Posterior cingulate gyrus (tissue), 11 donors: ENCODE measurements at regions of chr20 and their contacts with region 1.

Region 1: DNA sequence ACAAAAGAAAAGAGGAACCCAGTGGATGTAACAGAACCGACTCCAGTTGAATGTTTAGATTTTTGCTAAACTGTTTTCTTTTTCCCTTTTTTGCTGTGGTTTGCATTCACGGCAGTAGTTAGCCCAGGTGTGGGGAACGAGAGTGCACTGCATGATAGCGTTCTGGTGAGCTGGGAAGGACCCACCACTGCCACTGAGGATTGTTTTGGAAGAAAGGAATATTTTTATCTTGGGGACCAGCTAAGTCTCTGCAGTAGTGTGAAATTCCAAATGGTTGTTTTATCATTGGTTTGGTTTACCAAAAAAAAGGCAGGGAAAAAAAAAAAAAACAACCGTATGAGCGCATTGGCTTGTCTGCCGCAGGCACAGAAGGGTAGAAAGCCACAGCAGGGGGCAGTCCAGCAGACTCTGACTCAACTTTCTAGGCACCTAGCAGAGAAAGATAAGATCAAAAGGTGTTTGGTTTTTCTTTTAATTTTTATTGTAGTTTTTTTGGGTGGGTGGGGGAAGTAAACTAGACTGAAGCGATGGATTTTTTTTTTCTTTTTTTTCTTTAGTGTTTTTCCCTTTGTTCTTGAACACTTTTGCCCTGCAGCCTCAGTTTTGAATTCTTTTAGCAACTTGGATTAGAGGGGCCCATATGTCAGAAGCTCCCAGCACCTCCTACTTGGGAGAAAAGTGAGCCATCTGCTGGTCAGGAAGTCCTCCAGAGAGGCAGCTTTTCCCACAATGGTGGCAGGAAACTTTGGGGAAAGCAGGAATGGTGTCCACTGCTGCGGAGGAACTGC is 13.5 kb upstream of the RAB5IF start:
- DNase-seq: peak in 4 of 10 donors; percentile 37 to 59 (median 46)

Region 2: DNA sequence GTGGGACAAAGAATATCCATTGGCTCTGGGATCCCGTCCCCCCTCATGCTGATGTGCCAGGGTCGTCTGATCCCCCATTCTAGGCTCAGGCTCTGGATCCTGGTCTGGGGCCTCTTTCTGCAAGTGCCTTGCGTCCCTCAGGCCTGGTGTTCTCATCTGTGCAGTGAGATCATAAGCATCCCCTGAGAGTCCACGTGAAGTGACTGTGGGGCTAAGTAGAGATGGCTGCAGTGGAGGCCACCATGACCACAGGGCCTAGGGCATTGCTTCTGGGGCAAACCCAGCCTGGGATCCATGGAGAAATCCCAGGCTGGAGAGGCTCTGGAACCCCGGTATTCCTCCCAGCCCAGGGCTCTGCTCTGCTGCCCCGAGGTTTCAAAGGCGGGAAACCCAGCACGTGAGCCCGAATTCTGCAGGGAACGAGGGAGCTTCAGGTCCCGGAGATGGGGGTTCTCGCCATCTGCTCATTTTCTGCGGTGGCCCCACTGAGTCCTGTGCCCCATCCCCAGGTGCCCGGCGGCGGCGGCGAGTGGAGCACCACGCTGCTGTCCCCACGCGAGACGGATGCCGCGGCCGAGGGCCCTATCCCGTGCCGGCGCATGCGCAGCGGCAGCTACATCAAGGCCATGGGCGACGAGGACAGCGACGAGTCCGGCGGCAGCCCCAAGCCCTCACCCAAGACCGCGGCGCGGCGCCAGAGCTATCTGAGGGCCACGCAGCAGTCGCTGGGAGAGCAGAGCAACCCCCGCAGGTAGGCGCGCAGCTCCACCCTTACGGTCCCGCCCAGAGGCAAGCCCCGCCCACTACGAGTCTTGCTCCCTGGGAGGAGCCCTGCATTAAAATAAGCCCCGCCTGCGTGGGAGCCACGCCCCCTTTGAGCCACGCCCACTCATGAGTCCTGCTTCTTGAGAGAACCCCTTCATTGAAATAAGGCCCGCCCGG is 156.2 kb before region 1 on chr20:
- intact Hi-C with region 1: no loop called
- DNase-seq: peak in 7 of 10 donors; percentile 9 to 90 (median 38)

Region 3: GRCh38 chr20:36550797-36551299 is 41.2 kb before region 1 on chr20:
- intact Hi-C with region 1: loop called (anchors 5 kb)
- DNase-seq: peak in 2 of 10 donors; percentile 37 to 43

Region 4: GRCh38 chr20:36569847-36570429 is 22.1 kb before region 1 on chr20:
- intact Hi-C with region 1: no loop called
- DNase-seq: no peak

Region 5: GRCh38 chr20:36579996-36580545 is 12.0 kb before region 1 on chr20:
- intact Hi-C with region 1: no loop called
- DNase-seq: no peak